ENCODE measurements at regions of chr11 and their contacts with region 1.

Region 1: GRCh38 chr11:76185931-76186401 is 20.3 kb downstream of the WNT11 start:
- DNase-seq: no peak
- ATAC-seq: no peak
- H3K4me3 ChIP-seq: no peak overlapping the region
- H3K27ac ChIP-seq: no peak overlapping the region
- H3K4me1 ChIP-seq: no peaks in the 10 kb centered on the region
- H3K27me3 ChIP-seq: no peaks in the 10 kb centered on the region
- CTCF ChIP-seq: no peak

Region 2: DNA sequence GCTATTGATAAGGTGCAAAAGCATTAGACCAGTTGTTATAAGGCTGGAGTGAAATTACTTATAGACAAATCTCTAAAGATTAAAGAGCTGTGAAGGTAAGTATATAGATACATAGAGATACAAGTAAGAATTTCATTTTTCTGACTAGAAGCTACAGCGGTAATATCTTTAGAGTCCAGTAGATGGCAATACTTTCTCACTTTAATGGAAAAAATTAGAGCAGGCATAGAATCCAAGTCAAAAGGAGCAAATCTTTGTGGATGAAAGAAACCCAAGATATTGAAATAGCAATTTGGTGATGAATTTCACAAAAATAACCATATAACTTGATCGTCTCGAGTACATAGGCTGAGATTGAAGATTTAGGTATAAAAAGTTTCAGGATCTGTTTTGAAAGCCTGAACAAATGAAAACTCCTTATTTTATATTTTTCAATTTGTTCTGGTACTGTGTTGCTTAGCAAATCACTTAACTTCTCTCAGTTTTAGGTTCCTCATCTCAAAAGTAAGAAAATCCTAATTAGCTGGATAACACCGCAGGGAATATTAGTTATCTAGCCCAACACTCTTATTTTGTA is 289.0 kb before region 1 on chr11:
- CTCF ChIA-PET with region 1: interaction called, 11 read pairs
- POLR2A ChIA-PET with region 1: no interaction called
- in situ Hi-C with region 1: no loop called
- intact Hi-C with region 1: no loop called
- DNase-seq: peak; percentile 30
- ATAC-seq: peak; percentile 60; the same call in 1 of the 2 replicates
- H3K4me3 ChIP-seq: no peak overlapping the region
- H3K27ac ChIP-seq: no peak overlapping the region
- H3K4me1 ChIP-seq: no peaks in the 10 kb centered on the region
- H3K27me3 ChIP-seq: no peaks in the 10 kb centered on the region
- CTCF ChIP-seq: peak; percentile 77; the same call in 1 of the 2 replicates

Region 3: DNA sequence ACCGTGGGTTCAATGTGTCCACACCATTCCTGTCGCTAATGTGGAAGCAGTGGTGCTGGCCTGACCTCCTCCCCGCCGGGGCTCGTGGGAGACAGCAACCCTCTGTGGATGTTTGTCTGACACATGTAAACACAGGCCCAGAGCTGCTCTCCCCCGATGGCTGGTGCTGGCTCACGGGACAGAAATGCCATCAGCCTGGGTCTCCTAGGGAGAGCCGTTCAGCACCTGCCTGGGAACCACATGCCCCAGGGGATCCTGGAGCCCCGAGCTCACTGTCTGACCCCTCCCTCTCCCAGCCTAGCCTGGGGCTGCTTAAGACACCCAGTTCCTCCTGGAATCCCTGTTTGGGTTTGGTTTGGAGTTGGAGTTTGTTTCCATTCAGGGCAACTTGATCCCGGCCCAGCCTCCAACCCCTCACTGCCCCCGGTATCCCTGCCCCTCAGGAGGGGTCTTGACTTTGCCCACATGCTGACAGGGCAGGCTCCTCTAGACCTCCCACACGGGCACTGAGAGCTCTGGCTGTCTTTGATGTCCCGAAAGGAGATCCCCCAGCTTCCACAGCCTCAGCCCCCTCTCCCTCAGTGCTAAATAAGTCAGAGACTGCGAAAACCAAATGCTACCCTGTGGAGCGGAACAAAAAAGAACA is 71.2 kb after region 1 on chr11:
- CTCF ChIA-PET with region 1: no interaction called
- POLR2A ChIA-PET with region 1: no interaction called
- in situ Hi-C with region 1: no loop called
- intact Hi-C with region 1: no loop called
- DNase-seq: no peak
- ATAC-seq: peak; percentile 40; the same call in 1 of the 2 replicates
- H3K4me3 ChIP-seq: no peak overlapping the region
- H3K27ac ChIP-seq: no peak overlapping the region
- H3K4me1 ChIP-seq: 0 out of 2 replicates have a peak, but pooled peaks cover 4% of the 10 kb centered on the region
- H3K27me3 ChIP-seq: peaks cover 2% of the 10 kb centered on the region
- CTCF ChIP-seq: no peak

Measured in Panc1 (cell line).